Left ventricle myocardium inferior (tissue), 1 donor: ENCODE measurements at regions of chr1 and their contacts with region 1.

Region 1: GRCh38 chr1:151098126-151098525 is 27.6 kb downstream of the GABPB2 start:
- DNase-seq: no peak
- H3K4me3 ChIP-seq: no peak overlapping the region
- H3K27ac ChIP-seq: no peak overlapping the region
- H3K4me1 ChIP-seq: no peaks in the 10 kb centered on the region
- H3K27me3 ChIP-seq: no peaks in the 10 kb centered on the region
- CTCF ChIP-seq: no peak

Region 2: DNA sequence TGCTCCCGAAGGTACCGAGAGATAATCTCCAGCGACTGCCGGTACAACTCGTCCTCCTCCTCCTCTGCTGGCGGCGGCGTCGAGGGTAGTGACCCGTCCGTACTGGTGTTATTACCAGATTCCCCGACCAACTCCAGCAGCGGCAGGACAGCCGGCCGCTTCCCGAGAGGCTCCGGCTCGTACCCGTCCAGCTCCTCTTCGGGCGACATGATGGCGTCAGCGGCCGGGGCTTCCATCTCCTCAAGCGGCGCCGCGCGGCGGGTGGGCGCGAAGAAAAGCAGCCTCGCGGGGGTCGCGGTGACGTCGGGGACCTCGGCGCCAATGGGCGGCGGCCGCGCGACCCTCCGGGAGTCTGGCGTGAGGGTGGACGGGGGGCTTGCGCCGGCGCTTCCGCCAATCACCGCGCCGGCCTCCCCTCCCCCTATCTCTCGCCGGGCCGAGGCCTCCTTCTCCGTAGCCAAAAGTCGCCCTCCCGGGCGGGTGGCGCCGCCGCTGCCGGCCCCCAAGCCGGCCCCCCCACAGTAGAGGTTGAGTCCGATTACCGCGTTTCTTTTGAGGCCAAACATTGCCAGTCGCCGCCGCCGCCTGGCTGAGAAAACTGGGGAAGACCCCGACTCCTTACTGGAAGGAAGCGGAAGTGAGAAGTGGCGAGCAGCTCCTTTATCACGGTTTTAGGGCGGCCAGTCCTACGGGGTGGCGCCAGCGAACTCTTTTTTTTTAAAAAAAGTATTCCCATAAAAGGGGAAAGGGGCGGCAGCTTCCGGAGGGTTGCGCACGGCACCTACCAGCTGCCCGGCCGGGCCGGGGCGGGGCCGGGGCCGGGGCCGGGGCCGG is 518.9 kb before region 1 on chr1 and contains the start of gene MCL1:
- intact Hi-C with region 1: no loop called
- DNase-seq: peak; percentile 95
- H3K4me3 ChIP-seq: peak within 1 kb of the TSS; percentile 81
- H3K27ac ChIP-seq: peak within 1 kb of the TSS; percentile 96
- H3K4me1 ChIP-seq: peaks cover 57% of the 10 kb centered on the region
- H3K27me3 ChIP-seq: no peaks in the 10 kb centered on the region
- CTCF ChIP-seq: no peak
- total RNA-seq, gene MCL1: 97.0 TPM

Region 3: GRCh38 chr1:150961799-150962198 is 136.3 kb before region 1 on chr1:
- intact Hi-C with region 1: no loop called
- DNase-seq: no peak
- H3K4me3 ChIP-seq: no peak overlapping the region
- H3K27ac ChIP-seq: no peak overlapping the region
- H3K4me1 ChIP-seq: no peaks in the 10 kb centered on the region
- H3K27me3 ChIP-seq: no peaks in the 10 kb centered on the region
- CTCF ChIP-seq: no peak

Region 4: GRCh38 chr1:151156515-151156819 is 58.3 kb after region 1 on chr1 and contains the start of gene TNFAIP8L2:
- intact Hi-C with region 1: loop called (anchors 5 kb)
- DNase-seq: peak; percentile 58
- H3K4me3 ChIP-seq: peak within 1 kb of the TSS; percentile 43
- H3K27ac ChIP-seq: peak within 1 kb of the TSS; percentile 55
- H3K4me1 ChIP-seq: peaks cover 15% of the 10 kb centered on the region
- H3K27me3 ChIP-seq: no peaks in the 10 kb centered on the region
- CTCF ChIP-seq: no peak
- total RNA-seq, gene TNFAIP8L2: 0.88 TPM